HEK293 (cell line): ENCODE measurements at regions of chr9 and their contacts with region 1.

Region 1: GRCh38 chr9:93003552-93004407 is 54.7 kb upstream of the SUSD3 start:
- H3K4me3 ChIP-seq: no peak overlapping the region
- H3K27ac ChIP-seq: no peak overlapping the region
- H3K4me1 ChIP-seq: no peaks in the 10 kb centered on the region
- CTCF ChIP-seq: peak; percentile 50; the same call in 1 of the 2 replicates

Region 2: DNA sequence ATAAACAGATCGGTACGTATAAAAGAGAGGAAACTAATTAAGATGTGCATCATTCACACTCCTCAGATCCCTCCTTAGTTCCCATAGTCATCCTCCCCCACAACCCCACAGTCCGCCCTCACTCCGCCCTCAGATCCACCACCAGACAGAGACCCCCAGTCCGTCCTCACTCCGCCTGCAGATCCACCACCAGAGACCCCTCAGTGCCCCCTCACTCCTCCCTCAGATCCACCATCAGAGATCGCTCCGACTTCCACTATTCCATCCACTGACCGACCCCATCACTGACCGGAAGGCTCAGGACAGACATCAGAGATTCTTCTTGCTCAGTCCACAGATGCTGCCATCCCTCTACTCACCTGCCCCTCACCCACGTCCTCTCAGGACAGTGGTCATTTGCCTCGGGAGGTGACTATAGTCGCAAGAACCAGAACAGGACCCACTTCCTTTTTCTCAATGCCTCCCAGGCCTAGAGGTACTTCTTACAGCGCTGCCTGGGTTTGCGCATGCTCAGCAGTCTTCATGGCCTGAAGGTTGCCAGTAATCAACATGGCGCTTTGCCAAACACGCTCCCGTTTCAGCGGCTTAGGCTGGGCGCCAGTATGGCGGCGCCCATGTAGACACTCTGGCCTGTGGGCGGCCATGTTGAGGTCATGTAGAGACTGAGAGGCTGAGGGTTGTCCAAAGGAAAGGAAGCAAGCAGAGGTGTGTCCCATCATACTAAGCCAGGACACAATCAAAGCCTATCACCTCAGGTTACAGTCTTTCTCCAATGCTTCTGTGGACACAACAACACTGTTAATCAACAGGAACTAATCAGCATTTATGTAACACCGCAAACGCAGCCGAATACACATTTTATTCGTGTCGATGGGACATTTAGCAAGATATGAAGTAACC is 126.0 kb before region 1 on chr9 and contains the start of gene ZNF484:
- CTCF ChIA-PET with region 1: no interaction called
- POLR2A ChIA-PET with region 1: no interaction called
- H3K4me3 ChIP-seq: peak within 1 kb of the TSS; percentile 81
- H3K27ac ChIP-seq: peak within 1 kb of the TSS; percentile 55; the same call in 1 of the 2 replicates
- H3K4me1 ChIP-seq: no peaks in the 10 kb centered on the region
- CTCF ChIP-seq: no peak

Region 3: DNA sequence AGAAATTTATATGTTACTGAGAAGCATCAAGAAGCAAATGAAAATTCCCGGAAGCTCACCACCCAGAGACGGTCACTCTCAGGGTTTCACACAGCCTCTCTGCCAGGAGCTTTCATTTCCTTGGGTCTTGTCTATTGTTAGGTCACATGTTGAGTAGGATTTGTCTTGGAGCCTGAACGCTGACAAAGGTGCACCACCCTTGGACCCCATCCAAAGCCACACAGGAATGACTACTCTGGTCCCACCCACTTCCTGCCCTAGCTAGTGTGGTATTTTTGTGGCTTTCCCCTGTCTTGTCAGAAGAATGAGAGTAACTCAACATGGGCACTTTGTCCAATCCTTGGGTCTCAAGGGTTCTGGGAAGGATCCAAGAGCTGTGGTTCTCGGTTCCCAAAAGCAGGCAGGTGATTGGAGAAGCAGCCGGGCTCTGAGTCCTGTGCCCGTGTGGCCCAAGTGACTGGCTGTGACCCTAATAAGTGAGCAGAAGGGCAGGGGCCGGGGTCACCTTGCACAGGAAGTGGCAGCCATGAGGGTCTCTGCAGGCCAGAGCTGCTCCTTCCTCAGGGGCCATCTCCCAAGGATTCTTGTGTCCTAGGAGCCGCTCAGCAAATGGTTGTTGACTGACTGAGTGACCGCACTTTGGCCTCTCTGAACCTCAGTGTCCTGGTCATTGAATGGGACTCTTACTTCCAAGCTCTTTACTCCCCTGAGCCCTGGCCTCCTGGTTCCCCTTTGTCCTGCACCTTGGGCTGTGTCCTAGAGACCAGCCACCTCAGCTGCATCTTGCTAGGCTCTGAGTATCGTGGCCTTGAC is 49.5 kb before region 1 on chr9:
- CTCF ChIA-PET with region 1: interaction called, 17 read pairs
- POLR2A ChIA-PET with region 1: no interaction called
- H3K4me3 ChIP-seq: no peak overlapping the region
- H3K27ac ChIP-seq: no peak overlapping the region
- H3K4me1 ChIP-seq: no peaks in the 10 kb centered on the region
- CTCF ChIP-seq: no peak

Region 4: DNA sequence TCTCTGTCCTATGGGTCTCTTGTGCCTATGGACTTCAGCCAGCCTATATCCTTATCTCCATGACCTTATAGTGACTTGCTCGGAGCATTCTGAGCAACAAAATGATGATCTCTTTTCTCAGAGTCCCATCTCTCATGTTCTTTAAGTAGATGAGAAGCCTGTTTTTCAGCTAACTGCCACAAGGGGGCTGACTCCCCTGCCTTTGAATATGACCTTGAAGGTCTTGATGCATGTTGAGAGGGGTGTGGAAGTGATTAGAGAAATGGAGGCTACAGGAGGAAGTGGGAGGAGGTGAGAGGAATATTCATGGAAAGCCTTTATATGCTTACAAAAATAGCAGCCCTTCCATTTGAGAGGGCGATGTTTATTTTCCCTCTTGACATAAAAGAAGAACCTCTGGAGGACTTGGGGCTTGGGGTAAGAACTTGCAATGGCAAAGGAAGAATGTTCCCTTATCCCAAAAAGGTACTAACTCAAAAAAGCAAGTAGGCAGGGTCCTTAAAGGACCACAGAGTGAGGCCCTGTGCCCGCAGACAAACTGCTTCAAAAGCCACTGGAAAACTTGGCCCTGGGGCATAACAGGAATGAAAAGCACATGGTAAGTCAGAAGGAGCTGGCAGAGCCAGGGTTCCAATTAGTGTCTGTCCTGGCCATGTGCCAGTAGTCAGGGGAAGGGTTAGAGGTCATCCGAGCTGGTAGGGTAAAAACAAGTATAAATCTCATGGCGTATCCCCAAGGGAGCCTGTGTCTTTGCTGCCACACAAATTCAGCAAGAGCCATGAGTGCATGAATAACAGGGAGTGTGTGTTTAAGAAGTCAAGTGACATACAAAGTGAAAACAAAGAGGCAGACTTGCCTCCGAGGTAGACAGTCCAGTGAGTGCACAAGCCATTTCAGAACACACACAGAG is 17.3 kb before region 1 on chr9:
- CTCF ChIA-PET with region 1: interaction called, 15 read pairs
- POLR2A ChIA-PET with region 1: no interaction called
- H3K4me3 ChIP-seq: no peak overlapping the region
- H3K27ac ChIP-seq: no peak overlapping the region
- H3K4me1 ChIP-seq: no peaks in the 10 kb centered on the region
- CTCF ChIP-seq: no peak

Region 5: DNA sequence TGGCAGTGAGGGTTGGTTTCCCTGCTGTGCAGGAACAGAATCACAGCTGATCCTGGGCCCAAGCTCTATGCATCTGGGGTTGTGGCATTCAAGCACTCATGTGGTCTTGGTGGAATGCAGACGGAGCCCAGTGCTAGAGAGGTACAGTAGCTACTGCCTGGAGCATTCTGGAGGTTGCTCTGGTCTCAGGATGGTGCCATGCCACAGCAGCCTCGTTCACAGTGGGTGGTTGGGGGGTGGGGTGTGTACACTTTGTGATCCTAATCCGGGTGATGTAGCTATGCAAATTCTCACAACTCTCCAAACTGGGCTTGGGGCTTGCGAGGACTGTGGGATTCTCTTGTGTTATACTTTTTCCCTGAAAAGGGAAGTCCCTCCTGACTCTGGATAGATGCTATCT is 11.2 kb before region 1 on chr9:
- CTCF ChIA-PET with region 1: interaction called, 15 read pairs
- POLR2A ChIA-PET with region 1: no interaction called
- H3K4me3 ChIP-seq: no peak overlapping the region
- H3K27ac ChIP-seq: no peak overlapping the region
- H3K4me1 ChIP-seq: no peaks in the 10 kb centered on the region
- CTCF ChIP-seq: no peak

Region 6: GRCh38 chr9:93013856-93014582 is 10.2 kb after region 1 on chr9:
- CTCF ChIA-PET with region 1: interaction called, 24 read pairs
- POLR2A ChIA-PET with region 1: no interaction called
- H3K4me3 ChIP-seq: no peak overlapping the region
- H3K27ac ChIP-seq: no peak overlapping the region
- H3K4me1 ChIP-seq: no peaks in the 10 kb centered on the region
- CTCF ChIP-seq: no peak

Region 7: GRCh38 chr9:93057703-93058354 is 54.0 kb after region 1 on chr9:
- CTCF ChIA-PET with region 1: no interaction called
- POLR2A ChIA-PET with region 1: no interaction called
- H3K4me3 ChIP-seq: no peak overlapping the region
- H3K27ac ChIP-seq: no peak overlapping the region
- H3K4me1 ChIP-seq: no peaks in the 10 kb centered on the region
- CTCF ChIP-seq: no peak

Region 8: DNA sequence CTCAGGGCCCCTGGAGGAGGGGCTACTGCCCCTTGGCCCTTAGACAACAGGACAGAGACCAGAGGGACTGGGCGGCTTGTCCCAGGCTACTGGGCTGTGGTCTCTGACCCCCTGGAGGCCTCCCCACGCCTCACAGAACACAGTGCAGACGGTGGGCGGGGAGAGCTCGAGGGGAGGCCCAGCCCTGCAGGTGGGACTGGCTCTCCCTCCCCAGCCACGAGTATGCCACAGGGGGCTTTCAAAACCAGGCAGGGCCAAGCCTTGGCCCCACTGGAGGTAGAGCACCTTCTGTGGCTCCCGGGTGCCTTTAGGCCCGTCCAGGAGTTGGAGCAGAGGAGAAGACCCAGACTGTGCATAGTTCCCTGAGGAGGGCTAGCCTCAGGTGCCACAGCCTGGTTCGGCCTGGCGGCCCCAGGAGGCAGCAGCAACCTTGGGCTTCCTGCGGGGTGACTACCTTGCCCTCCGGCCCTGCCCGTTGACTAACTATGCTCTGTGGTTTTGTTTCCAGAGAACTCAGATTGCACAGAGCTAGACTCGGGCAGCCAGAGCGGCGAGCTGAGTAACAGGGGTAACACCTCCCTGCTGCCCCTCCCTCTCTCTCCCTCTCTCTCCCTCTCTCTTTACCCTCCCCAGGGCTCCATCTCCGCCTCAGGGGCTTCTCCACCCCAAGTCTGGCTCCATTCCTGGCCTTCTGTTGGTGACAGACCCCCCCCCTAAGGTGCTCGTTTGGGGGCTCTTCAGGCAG is 107.8 kb after region 1 on chr9:
- CTCF ChIA-PET with region 1: interaction called, 12 read pairs
- POLR2A ChIA-PET with region 1: no interaction called
- H3K4me3 ChIP-seq: no peak overlapping the region
- H3K27ac ChIP-seq: no peak overlapping the region
- H3K4me1 ChIP-seq: no peaks in the 10 kb centered on the region
- CTCF ChIP-seq: no peak